ENCODE measurements at regions of chrX and their contacts with region 1.

Region 1: GRCh38 chrX:79412972-79413371 is 45.8 kb upstream of the ITM2A start:
- DNase-seq: no peak
- ATAC-seq: no peak
- H3K4me3 ChIP-seq: peak overlapping the region in 9 of 12 donors; percentile 17 to 54 (median 42)
- H3K27ac ChIP-seq: peak overlapping the region in 3 of 12 donors; percentile 24 to 67 (median 42)
- H3K4me1 ChIP-seq: no peaks in the 10 kb centered on the region
- H3K27me3 ChIP-seq: no peaks in the 10 kb centered on the region
- CTCF ChIP-seq: peak; percentile 19 to 57 (median 38)
- POLR2A ChIP-seq: no peak

Region 2: DNA sequence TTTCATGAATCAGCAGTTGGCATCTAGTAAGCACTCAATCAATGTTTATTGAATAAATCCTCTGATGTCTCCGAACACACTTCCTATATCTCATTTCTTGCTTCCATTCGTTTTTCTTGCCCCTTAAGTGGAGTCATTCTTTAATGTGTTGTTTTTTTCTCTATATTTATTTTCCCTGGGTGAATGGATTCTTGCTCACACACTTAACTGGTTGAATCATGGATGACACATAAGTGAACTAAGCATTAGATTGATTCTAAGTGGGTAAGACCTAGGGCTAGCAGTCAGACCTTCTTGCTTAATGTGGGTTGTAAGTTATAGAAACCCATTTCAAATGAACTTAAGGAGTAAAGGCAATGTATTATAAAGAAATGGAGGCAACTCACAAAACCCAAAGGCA is 865.0 kb before region 1 on chrX:
- intact Hi-C with region 1: loop called in 5 of 10 experiments (anchors 10 kb)
- DNase-seq: no peak
- ATAC-seq: no peak
- H3K4me3 ChIP-seq: no peak overlapping the region
- H3K27ac ChIP-seq: no peak overlapping the region
- H3K4me1 ChIP-seq: no peaks in the 10 kb centered on the region
- H3K27me3 ChIP-seq: no peaks in the 10 kb centered on the region
- CTCF ChIP-seq: no peak
- POLR2A ChIP-seq: no peak

Region 3: DNA sequence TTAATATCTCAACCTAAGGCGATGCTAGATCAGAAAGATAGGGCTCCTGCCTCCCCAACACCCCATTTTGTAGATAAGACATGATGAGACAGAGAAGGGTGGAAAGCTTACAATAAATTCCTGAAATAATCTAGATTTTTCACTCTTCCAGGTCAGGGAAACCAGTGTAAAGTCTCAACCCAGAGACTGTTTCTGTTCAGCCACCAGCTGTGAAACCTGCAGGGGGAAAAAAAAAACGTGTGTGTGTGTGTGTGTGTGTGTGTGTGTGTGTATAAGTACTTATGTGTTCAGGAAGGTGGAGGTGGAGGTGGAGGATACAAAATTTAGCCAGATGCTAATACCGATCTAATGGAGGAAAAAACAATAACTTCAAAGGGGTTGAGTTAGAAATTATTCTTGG is 45.1 kb before region 1 on chrX:
- intact Hi-C with region 1: loop called in 1 of 10 experiments (anchors 2 kb)
- DNase-seq: no peak
- ATAC-seq: no peak
- H3K4me3 ChIP-seq: peak overlapping the region in 9 of 12 donors; percentile 51 to 70 (median 57)
- H3K27ac ChIP-seq: peak overlapping the region in 10 of 12 donors; percentile 15 to 78 (median 67)
- H3K4me1 ChIP-seq: peaks cover 0 to 8% (median 0%) of the 10 kb centered on the region in 12 donors
- H3K27me3 ChIP-seq: peaks cover 0 to 9% (median 0%) of the 10 kb centered on the region in 9 donors
- CTCF ChIP-seq: no peak
- POLR2A ChIP-seq: no peak